Activated CD4-positive, alpha-beta memory T cell treated with anti-CD3 and anti-CD28 coated beads for 36 hours (primary cell): ENCODE measurements at regions of chr10 and their contacts with region 1.

Region 1: DNA sequence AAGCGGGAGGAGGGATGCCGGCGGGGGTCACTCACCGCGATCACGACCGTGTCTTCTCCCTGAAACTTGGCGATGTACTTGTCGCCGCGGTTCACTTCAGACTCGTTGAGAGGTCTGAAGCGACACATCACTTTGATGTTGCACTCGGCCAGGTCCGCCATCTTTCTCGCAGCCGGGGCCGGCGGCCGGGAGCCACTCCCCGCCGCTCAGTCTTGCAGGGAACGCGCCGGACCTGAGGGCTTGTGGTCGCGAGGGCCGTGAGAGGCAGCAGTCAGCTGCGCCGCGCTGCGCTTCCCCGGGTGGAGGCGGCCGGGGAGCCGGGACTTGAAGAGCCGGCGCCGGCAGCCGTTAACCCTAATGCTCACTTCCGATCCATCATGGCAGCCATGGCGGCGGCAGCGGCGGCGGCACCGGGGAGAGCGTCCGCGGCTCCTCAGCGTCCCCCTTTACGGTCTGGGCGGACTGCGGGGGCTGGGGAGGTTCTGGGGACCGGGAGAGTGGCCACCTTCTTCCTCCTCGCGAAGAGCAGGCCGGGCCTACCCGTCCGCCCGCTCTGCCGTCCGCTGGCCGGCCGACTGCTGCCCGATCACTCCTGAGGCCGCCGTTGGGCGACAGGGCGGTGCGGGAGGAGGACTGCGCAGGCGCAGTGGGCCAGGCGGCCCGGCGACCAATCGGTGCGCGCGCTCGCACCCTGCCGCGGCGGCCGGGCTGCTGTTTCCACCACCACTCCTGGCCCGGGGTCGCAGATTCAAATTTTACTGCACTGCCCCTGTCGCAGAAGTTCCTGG is at the start of gene KIF5B:
- DNase-seq: peak; percentile 90
- H3K4me3 Mint-ChIP-seq: peak within 1 kb of the TSS; percentile 96
- H3K27ac Mint-ChIP-seq: peak within 1 kb of the TSS; percentile 94
- H3K4me1 Mint-ChIP-seq: peaks cover 37% of the 10 kb centered on the region
- H3K27me3 Mint-ChIP-seq: no peaks in the 10 kb centered on the region
- total RNA-seq, gene KIF5B: 73.9 to 75.2 TPM

Region 2: DNA sequence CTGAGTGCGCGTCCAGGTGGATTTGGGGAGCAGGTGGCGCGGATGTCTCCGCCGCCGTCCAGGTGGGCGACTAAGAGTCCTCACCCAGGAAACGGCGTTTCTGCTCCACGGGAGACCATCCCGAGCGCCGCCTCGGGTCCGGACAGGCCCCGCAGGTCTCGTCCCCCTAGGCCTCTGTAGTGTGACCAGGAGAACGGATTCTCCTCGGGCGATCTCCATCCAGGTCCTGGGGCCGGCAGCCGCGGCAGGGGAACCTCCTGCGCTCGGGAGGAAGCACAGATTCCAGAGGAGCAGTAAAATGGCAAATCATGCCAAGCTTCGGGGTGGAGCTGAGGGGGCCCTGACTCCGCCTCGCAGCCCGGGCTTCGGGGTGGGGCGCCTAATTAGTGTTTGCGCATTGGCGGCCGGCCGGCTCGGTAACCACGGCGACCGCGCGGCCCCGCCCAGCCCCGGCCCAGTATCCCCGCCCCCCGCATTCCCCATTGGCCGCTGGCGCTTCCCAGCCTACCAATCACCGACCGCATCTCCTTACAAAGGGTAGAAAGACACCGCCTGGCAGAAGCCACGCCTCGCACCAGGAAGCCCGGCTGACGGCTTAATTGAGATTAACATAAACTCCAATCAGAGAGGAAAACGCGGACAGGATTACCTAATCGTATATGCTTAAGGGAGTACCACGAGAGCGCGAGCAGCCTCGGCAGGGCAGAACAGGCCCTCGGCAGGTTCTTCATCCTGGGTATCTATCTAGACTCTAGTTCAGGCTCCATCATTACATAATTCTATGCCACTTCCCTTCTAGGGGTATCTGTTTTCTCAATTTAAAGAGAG is 296.0 kb before region 1 on chr10:
- CTCF ChIA-PET with region 1: no interaction called
- POLR2A ChIA-PET with region 1: no interaction called
- intact Hi-C with region 1: no loop called
- DNase-seq: peak; percentile 97
- H3K4me3 Mint-ChIP-seq: peak overlapping the region; percentile 96
- H3K27ac Mint-ChIP-seq: peak overlapping the region; percentile 91
- H3K4me1 Mint-ChIP-seq: peaks cover 10% of the 10 kb centered on the region
- H3K27me3 Mint-ChIP-seq: no peaks in the 10 kb centered on the region

Region 3: DNA sequence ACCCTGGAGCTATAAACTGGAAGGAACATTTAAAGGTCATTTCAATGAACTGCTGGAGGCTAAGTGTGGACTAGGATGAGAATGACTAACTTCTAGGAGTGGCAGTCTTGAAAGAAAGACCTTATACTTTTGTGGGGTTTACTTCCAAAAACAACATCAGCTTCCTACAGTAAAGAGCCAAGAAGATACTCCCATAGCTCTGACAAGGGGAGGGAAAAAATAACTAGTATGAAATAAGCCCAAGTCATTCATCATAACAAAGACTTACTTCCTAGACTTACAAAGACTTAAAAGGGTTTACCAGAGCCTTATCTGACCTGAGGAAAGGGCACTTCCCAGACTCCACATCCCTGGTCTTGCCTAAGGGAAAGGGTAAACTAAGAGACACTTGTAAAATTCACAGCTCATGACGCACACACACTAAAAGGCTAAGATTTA is 159.0 kb before region 1 on chr10:
- CTCF ChIA-PET with region 1: no interaction called
- POLR2A ChIA-PET with region 1: no interaction called
- intact Hi-C with region 1: no loop called
- DNase-seq: no peak
- H3K4me3 Mint-ChIP-seq: no peak overlapping the region
- H3K27ac Mint-ChIP-seq: no peak overlapping the region
- H3K4me1 Mint-ChIP-seq: peaks cover 29% of the 10 kb centered on the region
- H3K27me3 Mint-ChIP-seq: no peaks in the 10 kb centered on the region

Region 4: GRCh38 chr10:32005050-32005449 is 51.0 kb before region 1 on chr10:
- CTCF ChIA-PET with region 1: interaction called, 3 read pairs
- POLR2A ChIA-PET with region 1: no interaction called
- intact Hi-C with region 1: loop called (anchors 5 kb)
- DNase-seq: peak; percentile 38
- H3K4me3 Mint-ChIP-seq: no peak overlapping the region
- H3K27ac Mint-ChIP-seq: no peak overlapping the region
- H3K4me1 Mint-ChIP-seq: peaks cover 4% of the 10 kb centered on the region
- H3K27me3 Mint-ChIP-seq: no peaks in the 10 kb centered on the region

Region 5: GRCh38 chr10:32149252-32149955 is 93.4 kb after region 1 on chr10:
- CTCF ChIA-PET with region 1: no interaction called
- POLR2A ChIA-PET with region 1: no interaction called
- intact Hi-C with region 1: loop called (anchors 2 kb)
- DNase-seq: peak; percentile 58
- H3K4me3 Mint-ChIP-seq: no peak overlapping the region
- H3K27ac Mint-ChIP-seq: peak overlapping the region; percentile 43
- H3K4me1 Mint-ChIP-seq: peaks cover 29% of the 10 kb centered on the region
- H3K27me3 Mint-ChIP-seq: peaks cover 4% of the 10 kb centered on the region

Region 6: GRCh38 chr10:32445740-32446535 is 389.9 kb after region 1 on chr10 and contains the start of gene CCDC7:
- CTCF ChIA-PET with region 1: no interaction called
- POLR2A ChIA-PET with region 1: no interaction called
- intact Hi-C with region 1: loop called (anchors 5 kb)
- DNase-seq: peak; percentile 89
- H3K4me3 Mint-ChIP-seq: peak within 1 kb of the TSS; percentile 89
- H3K27ac Mint-ChIP-seq: peak within 1 kb of the TSS; percentile 96
- H3K4me1 Mint-ChIP-seq: peaks cover 13% of the 10 kb centered on the region
- H3K27me3 Mint-ChIP-seq: no peaks in the 10 kb centered on the region
- total RNA-seq, gene CCDC7: 8.6 to 11.6 TPM